ENCODE measurements at regions of chr6 and their contacts with region 1.

Region 1: DNA sequence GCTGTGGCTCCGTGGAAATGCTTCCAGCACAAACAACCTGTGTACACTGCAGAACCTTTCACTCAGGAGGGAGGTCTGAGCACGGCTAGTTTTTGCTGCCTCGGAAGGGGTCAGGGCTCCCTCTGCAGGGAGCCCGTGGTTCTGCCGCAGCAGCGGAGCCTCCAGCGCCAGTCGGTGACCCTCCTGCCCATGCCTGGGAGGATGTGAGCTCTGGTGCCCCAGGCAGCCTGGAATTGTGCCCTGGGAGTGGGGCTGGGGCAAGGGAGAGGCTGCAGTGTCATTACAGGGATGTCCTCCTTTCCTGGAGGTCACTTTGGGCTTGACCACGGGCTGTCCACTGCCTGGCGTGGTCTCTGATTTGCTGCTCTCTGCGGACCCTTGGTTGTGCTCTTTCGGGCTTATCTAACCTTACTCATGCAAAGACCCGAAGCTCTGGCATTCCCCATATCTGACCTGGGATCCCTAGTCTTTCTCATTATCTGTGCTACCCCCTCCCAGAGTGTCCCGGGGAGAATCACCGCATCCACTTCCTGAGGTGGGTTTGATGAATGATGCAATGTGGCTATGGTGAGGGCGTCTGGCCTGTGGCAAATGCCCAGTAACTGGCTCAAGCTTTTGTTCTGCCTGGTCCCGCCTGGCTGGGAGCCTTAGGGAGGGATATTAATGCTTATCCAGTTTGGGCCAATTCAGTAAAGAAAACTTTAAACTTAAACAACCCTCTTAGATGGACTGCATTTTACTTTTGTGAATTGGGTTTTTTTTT is 59.6 kb upstream of the TAGAP start:
- DNase-seq: peak; percentile 72 to 92
- ATAC-seq: peak; percentile 68 to 81 (median 68)
- H3K4me3 ChIP-seq: no peak overlapping the region
- H3K4me3 Mint-ChIP-seq: peak overlapping the region; percentile 67
- H3K27ac ChIP-seq: peak overlapping the region; percentile 71
- H3K27ac Mint-ChIP-seq: peak overlapping the region; percentile 83 to 95
- H3K4me1 ChIP-seq: peaks cover 61% of the 10 kb centered on the region
- H3K4me1 Mint-ChIP-seq: peaks cover 56 to 62% of the 10 kb centered on the region in 2 donors
- H3K27me3 ChIP-seq: no peaks in the 10 kb centered on the region
- H3K27me3 Mint-ChIP-seq: no peaks in the 10 kb centered on the region
- CTCF ChIP-seq: peak; percentile 94

Region 2: DNA sequence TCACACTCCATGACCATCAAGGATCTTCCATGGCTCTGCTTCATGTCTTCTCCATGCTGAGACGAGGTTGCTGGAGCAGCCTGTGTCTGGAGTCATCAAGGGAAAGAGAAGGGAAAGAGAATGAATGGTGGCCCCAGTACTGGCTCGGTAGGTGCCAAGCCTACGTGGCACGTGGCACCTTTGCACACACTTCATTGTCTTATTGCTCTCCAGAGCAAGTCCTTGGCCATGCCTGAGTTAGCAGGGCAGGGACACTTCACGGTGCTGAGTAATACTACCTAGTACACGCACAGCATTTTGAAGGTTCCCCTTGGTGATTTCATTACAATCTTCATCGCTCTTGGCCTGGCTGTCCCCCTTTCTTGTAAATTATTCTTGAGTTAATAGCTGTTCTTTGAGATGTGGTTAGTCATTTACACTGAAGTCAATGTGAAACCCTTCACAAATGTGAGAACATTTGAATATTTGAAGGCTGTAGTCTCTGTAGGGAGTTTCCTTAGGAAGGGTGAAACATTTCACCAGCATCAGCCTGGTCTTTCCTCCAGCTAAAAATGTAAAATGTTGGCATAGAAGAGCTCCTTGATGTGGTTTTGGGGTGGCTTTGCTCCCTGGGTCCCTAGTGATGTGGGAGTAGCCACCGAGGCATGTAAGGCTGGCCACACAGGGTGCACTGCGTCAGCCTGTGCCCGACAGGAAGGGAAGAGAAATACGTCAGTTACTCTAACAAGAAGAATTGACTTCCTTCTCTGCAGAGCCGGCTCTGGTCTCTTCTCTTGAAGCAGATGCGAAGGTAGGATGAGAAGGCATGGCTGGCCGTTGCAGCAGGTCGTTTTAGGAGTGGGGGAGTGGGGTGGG is 454.8 kb before region 1 on chr6 and contains the start of gene SYTL3:
- intact Hi-C with region 1: loop called (anchors 2 kb)
- DNase-seq: peak; percentile 62 to 95
- ATAC-seq: peak; percentile 47 to 73 (median 60)
- H3K4me3 ChIP-seq: peak within 1 kb of the TSS; percentile 41
- H3K4me3 Mint-ChIP-seq: peak within 1 kb of the TSS; percentile 87
- H3K27ac ChIP-seq: peak within 1 kb of the TSS; percentile 84
- H3K27ac Mint-ChIP-seq: peak within 1 kb of the TSS; percentile 96 to 99
- H3K4me1 ChIP-seq: peaks cover 66% of the 10 kb centered on the region
- H3K4me1 Mint-ChIP-seq: peaks cover 57 to 62% of the 10 kb centered on the region in 2 donors
- H3K27me3 ChIP-seq: no peaks in the 10 kb centered on the region
- H3K27me3 Mint-ChIP-seq: no peaks in the 10 kb centered on the region
- CTCF ChIP-seq: no peak
- total RNA-seq, gene SYTL3: 84.1 to 143 (median 89.0) TPM

Region 3: DNA sequence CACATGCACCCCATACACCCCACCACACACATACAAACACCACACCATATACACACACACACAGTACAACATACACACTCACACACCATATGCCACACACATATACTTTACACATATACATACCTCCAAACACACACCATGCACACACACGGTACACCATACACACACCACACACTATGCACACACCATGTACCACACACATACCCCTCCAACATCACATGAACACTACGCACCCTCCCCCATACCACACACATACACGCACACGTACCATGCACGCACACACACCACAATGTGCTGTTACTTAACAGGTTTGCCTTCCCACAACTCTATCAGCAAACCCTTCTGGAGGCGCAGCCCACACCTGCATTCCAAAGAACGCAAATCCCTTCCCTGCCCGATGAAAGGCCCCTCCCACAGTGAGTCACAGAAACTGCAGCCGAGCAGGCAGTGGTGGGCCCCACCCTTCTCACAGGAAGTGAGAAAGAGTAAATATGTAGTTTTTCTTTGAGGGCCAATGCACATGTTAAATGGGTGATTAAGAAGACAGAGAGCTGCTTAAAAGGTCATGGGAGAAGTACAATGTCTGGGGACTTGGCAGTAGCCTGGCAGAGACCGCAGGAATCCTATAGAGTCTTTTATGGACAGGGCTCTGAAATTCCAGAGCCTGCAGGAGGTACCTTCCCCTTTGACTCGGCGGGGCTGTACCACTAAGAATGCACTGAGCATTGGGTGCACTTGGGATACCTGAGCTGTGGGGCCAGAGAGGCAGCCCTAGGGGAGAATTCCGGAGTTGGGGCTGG is 251.1 kb before region 1 on chr6:
- intact Hi-C with region 1: loop called (anchors 5 kb)
- DNase-seq: peak; percentile 77 to 93
- ATAC-seq: peak; percentile 65 to 86 (median 73)
- H3K4me3 ChIP-seq: peak overlapping the region; percentile 22
- H3K4me3 Mint-ChIP-seq: no peak overlapping the region
- H3K27ac ChIP-seq: peak overlapping the region; percentile 91
- H3K27ac Mint-ChIP-seq: no peak overlapping the region
- H3K4me1 ChIP-seq: peaks cover 64% of the 10 kb centered on the region
- H3K4me1 Mint-ChIP-seq: peaks cover 25 to 27% of the 10 kb centered on the region in 2 donors
- H3K27me3 ChIP-seq: no peaks in the 10 kb centered on the region
- H3K27me3 Mint-ChIP-seq: no peaks in the 10 kb centered on the region
- CTCF ChIP-seq: no peak

Region 4: DNA sequence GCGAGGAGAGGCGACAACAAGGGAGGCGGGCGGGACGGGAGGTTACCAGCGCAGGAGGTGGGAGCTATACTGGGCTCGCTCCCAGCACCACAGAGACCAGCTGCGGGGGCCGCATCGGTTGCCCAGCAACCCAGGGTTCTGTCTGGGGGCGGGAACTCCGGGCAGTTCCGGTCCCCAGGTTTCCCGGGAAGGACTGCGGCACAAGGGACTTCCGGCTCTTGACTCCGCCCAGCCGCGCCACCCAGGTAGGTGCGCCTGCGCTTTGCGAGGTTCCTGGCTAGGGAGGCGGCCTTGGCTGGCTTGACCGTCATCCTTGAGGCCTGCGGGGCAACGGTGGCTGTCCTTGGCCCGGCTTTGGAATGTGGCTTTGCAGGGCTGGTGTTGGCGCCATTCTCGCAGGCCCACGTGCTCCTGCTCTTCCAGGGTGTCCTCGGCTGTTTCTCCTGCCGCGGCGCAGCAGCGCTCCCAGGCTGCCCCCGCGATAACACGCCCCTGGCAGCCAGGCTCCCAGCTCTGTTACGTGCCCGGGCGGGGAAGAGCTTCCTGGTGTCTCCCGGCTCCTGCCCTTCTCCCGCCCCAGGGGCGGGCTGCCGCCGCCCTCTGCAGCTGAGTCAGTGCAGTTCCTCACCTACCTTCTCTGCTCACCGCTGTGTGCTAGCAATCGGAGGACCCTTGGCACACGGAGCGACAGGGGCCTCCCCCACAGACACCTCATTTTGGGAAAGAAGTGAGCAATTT is 104.5 kb before region 1 on chr6 and contains the start of gene RSPH3:
- intact Hi-C with region 1: loop called (anchors 2 kb)
- DNase-seq: peak; percentile 78 to 92
- ATAC-seq: peak; percentile 87 to 92 (median 89)
- H3K4me3 ChIP-seq: peak within 1 kb of the TSS; percentile 97
- H3K4me3 Mint-ChIP-seq: peak within 1 kb of the TSS; percentile 99
- H3K27ac ChIP-seq: peak within 1 kb of the TSS; percentile 76
- H3K27ac Mint-ChIP-seq: peak within 1 kb of the TSS; percentile 89 to 96
- H3K4me1 ChIP-seq: peaks cover 16% of the 10 kb centered on the region
- H3K4me1 Mint-ChIP-seq: peaks cover 17 to 38% of the 10 kb centered on the region in 2 donors
- H3K27me3 ChIP-seq: no peaks in the 10 kb centered on the region
- H3K27me3 Mint-ChIP-seq: no peaks in the 10 kb centered on the region
- CTCF ChIP-seq: no peak
- total RNA-seq, gene RSPH3: 1.5 to 2.9 (median 2.4) TPM

Region 5: GRCh38 chr6:159062564-159062945 is 41.8 kb before region 1 on chr6:
- intact Hi-C with region 1: loop called (anchors 1 kb)
- DNase-seq: peak; percentile 49 to 88
- ATAC-seq: peak; percentile 78 to 88 (median 86)
- H3K4me3 ChIP-seq: no peak overlapping the region
- H3K4me3 Mint-ChIP-seq: peak overlapping the region; percentile 72
- H3K27ac ChIP-seq: peak overlapping the region; percentile 98
- H3K27ac Mint-ChIP-seq: peak overlapping the region; percentile 94 to 99
- H3K4me1 ChIP-seq: peaks cover 47% of the 10 kb centered on the region
- H3K4me1 Mint-ChIP-seq: peaks cover 72 to 73% of the 10 kb centered on the region in 2 donors
- H3K27me3 ChIP-seq: no peaks in the 10 kb centered on the region
- H3K27me3 Mint-ChIP-seq: no peaks in the 10 kb centered on the region
- CTCF ChIP-seq: no peak

Region 6: GRCh38 chr6:159090530-159091480 is 13.5 kb before region 1 on chr6:
- intact Hi-C with region 1: no loop called
- DNase-seq: no peak
- ATAC-seq: no peak
- H3K4me3 ChIP-seq: no peak overlapping the region
- H3K4me3 Mint-ChIP-seq: no peak overlapping the region
- H3K27ac ChIP-seq: no peak overlapping the region
- H3K27ac Mint-ChIP-seq: no peak overlapping the region
- H3K4me1 ChIP-seq: peaks cover 15% of the 10 kb centered on the region
- H3K4me1 Mint-ChIP-seq: peaks cover 5 to 9% of the 10 kb centered on the region in 2 donors
- H3K27me3 ChIP-seq: no peaks in the 10 kb centered on the region
- H3K27me3 Mint-ChIP-seq: no peaks in the 10 kb centered on the region
- CTCF ChIP-seq: no peak

Region 7: DNA sequence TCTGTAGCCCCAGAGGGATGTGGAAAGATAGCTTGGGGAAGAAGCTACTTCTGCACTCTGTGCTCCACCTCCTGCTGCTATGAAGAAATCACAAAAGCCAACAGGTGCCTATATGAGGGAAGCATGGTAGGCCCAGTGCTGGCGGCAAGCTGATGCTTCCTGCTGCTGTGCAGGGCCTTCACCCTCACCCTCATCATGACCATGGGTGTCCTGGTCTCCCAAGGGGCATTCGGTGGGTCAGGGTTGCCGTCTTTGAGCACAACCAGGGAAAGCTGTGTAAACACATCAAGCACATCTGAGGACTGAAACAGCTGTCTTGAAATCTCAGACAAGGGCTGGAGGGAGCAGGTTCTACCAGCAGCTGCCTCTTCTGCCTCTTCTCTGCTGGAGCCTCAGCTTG is 248.8 kb after region 1 on chr6:
- intact Hi-C with region 1: no loop called
- DNase-seq: no peak
- ATAC-seq: no peak
- H3K4me3 ChIP-seq: no peak overlapping the region
- H3K4me3 Mint-ChIP-seq: no peak overlapping the region
- H3K27ac ChIP-seq: no peak overlapping the region
- H3K27ac Mint-ChIP-seq: no peak overlapping the region
- H3K4me1 ChIP-seq: no peaks in the 10 kb centered on the region
- H3K4me1 Mint-ChIP-seq: no peaks in the 10 kb centered on the region
- H3K27me3 ChIP-seq: no peaks in the 10 kb centered on the region
- H3K27me3 Mint-ChIP-seq: peaks cover 17 to 63% of the 10 kb centered on the region in 2 donors
- CTCF ChIP-seq: no peak